AG04450 (cell line): ENCODE measurements at regions of chr1 and their contacts with region 1.

Region 1: GRCh38 chr1:72623299-72623708 is 341.0 kb upstream of the NEGR1 start:
- DNase-seq: peak; percentile 11
- H3K4me3 ChIP-seq: no peak overlapping the region
- H3K27ac ChIP-seq: no peak overlapping the region
- H3K27me3 ChIP-seq: no peaks in the 10 kb centered on the region
- CTCF ChIP-seq: peak; percentile 76

Region 2: GRCh38 chr1:72419229-72419628 is 204.1 kb before region 1 on chr1:
- CTCF ChIA-PET with region 1: no interaction called
- POLR2A ChIA-PET with region 1: no interaction called
- DNase-seq: no peak
- H3K4me3 ChIP-seq: no peak overlapping the region
- H3K27ac ChIP-seq: no peak overlapping the region
- H3K27me3 ChIP-seq: no peaks in the 10 kb centered on the region
- CTCF ChIP-seq: no peak

Region 3: GRCh38 chr1:72635719-72636118 is 12.4 kb after region 1 on chr1:
- CTCF ChIA-PET with region 1: interaction called, 22 read pairs
- POLR2A ChIA-PET with region 1: no interaction called
- DNase-seq: no peak
- H3K4me3 ChIP-seq: no peak overlapping the region
- H3K27ac ChIP-seq: no peak overlapping the region
- H3K27me3 ChIP-seq: no peaks in the 10 kb centered on the region
- CTCF ChIP-seq: no peak

Region 4: GRCh38 chr1:72724951-72725861 is 101.9 kb after region 1 on chr1:
- CTCF ChIA-PET with region 1: no interaction called
- POLR2A ChIA-PET with region 1: no interaction called
- DNase-seq: no peak
- H3K4me3 ChIP-seq: no peak overlapping the region
- H3K27ac ChIP-seq: no peak overlapping the region
- H3K27me3 ChIP-seq: no peaks in the 10 kb centered on the region
- CTCF ChIP-seq: no peak

Region 5: DNA sequence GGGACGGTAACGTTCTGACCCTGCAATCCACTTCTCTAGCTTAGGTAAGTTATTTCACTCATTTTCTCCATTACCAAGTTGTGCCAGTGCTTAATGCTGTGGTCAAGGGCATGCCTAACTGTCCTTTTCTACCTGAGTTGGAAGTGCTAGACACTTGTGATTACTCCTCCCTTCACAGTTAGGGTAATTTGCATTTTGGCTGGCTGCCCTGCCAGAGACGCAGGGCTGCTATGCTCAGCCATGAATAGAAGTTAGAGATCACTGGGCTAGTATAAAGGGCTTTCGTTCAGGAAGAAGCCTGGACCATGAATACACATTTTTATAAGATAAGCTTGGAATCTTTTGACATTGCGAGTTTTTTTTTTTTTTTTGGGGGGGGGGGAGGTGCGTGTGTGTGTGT is 292.3 kb after region 1 on chr1:
- CTCF ChIA-PET with region 1: no interaction called
- POLR2A ChIA-PET with region 1: no interaction called
- DNase-seq: no peak
- H3K4me3 ChIP-seq: no peak overlapping the region
- H3K27ac ChIP-seq: no peak overlapping the region
- H3K27me3 ChIP-seq: no peaks in the 10 kb centered on the region
- CTCF ChIP-seq: no peak